Motor neuron (in vitro differentiated cells): ENCODE measurements at regions of chr4 and their contacts with region 1.

Region 1: GRCh38 chr4:113106108-113106507 is 56.7 kb downstream of the ANK2 start:
- ATAC-seq: peak in 3 of 8 experiments; percentile 52 to 69 (median 66)
- H3K4me3 ChIP-seq: no peak overlapping the region
- H3K27ac ChIP-seq: no peak overlapping the region
- H3K4me1 ChIP-seq: peaks cover 0 to 26% of the 10 kb centered on the region in 2 donors

Region 2: DNA sequence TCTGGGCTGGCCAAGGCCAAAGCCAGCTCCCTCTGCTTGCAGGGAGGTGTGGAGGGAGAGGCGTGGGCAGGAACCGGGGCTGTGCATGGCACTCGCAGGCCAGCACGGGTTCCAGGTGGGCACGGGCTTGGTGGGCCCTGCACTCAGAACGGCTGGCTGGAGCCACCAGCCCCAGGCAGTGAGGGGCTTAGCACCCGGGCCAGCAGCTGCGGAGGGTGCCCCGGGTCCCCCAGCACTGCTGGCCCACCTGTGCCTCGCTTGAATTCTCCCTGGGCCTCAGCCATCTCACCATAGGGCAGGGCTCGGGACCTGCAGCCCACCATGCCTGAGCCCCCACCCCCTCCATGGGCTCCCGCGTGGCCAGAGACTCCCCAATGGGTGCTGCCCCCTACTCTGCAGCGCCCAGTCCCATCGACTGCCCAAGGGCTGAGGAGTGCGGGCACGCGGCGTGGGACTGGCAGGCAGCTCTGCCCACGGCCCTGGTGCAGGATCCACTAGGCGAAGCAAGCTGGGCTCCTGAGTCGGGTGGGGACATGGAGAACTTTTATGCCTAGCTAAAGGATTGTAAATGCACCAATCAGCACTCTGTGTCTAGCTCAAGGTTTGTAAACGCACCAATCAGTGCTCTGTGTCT is 275.2 kb before region 1 on chr4:
- in situ Hi-C with region 1: no loop called
- ATAC-seq: no peak
- H3K4me3 ChIP-seq: no peak overlapping the region
- H3K27ac ChIP-seq: no peak overlapping the region
- H3K4me1 ChIP-seq: no peaks in the 10 kb centered on the region

Region 3: DNA sequence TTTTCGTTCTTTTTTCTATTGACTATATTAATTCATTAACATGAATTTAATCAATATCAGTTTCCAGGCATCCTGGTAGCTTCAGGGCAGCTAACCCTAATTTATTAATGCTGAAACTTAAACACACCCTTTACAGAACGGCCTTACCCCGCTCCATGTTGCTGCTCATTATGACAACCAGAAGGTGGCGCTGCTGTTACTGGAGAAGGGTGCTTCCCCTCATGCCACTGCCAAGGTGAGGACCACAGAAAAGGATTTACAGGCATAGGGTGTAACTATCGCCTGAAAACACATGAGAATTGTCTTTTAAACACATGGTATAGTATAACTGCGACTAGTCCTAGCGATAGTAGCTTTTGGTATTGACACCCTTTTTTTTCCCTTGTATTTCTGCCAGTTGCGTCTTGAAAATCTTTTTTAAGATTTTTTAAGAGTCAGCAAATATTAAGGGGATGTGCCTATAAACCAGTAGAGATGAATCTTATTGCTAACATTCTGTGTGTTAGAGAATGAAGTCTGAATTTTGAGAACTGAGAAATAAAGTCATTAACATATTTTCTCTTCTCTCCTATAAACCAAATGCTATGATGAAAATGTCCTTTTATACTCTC is 172.3 kb after region 1 on chr4:
- in situ Hi-C with region 1: loop called in 2 of 9 experiments (anchors 25 kb)
- ATAC-seq: peak; percentile 79 to 99 (median 95)
- H3K4me3 ChIP-seq: no peak overlapping the region
- H3K27ac ChIP-seq: no peak overlapping the region
- H3K4me1 ChIP-seq: no peaks in the 10 kb centered on the region